AG04449 (cell line): ENCODE measurements at regions of chr6 and their contacts with region 1.

Region 1: GRCh38 chr6:43150051-43150751 is 20.9 kb upstream of the SRF start:
- DNase-seq: no peak
- H3K4me3 ChIP-seq: no peak overlapping the region
- CTCF ChIP-seq: no peak

Region 2: DNA sequence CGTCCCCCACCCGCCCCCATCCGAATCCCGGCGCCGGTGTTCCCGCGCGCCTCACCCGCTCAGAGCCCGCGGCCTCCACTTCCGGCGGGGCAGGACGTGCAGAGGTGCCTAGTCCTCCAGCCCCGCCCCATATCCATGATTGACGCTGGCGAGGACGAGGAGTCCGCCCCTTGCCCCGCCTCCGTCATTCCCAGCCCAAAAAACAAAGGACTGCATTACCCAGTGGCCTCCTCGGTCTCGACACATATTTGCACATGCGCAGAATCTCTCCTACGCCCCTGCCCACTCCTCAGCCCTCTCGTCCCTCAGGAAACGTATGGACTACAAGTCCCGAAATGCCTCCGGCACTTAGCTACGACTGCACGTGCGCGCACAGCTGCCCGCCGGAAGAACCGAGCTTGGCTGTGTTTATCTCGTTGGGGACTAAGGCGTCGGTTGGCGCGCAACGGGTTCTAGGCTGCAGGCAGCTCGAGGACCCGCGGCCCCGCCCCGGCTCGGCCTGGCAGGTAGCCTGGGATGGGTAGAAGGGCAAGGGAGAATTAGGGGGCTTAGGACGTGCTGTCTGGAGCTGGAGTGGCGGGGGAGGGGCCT is 136.3 kb before region 1 on chr6 and contains the starts of genes KLHDC3 and MEA1:
- CTCF ChIA-PET with region 1: no interaction called
- POLR2A ChIA-PET with region 1: interaction called, 10 read pairs
- DNase-seq: peak; percentile 99
- H3K4me3 ChIP-seq: peak within 1 kb of the TSS; percentile 98
- CTCF ChIP-seq: no peak

Region 3: DNA sequence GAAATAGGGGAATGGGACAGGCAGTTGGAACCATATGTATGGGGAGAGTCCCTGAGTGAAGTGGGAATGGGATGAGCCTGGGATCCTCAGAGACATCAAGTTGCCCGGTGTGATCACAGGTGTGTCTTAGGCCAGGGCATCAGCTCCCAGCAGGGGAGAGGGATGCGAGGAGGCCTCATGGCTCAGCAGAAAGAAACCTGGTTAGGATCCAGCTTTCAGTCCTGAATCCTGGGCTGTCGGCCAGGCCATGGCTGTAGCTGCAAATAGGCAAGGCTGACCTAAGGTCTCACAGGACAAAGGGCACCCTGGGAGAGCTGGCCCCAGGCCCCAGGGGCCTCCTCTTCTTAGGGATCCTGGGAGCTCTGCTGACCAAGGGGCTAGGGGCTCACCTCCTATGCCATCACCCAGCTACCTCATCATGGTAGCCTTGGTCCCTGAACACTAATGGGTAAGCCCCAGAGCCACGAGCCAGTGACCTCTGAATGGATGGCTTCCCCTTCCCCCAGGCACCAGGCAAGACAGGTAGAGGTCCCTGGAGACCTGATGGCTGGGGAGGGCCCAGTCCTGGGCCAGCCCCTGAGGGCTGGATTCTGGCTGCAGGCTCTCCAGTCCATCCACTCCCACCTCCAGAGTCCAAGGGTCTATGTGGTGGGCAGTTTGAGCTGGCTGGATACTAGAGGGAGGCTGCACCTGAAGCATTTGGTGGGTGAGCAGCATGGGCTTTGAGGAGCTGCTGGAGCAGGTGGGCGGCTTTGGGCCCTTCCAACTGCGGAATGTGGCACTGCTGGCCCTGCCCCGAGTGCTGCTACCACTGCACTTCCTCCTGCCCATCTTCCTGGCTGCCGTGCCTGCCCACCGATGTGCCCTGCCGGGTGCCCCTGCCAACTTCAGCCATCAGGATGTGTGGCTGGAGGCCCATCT is 147.7 kb after region 1 on chr6 and contains the start of gene SLC22A7:
- CTCF ChIA-PET with region 1: no interaction called
- POLR2A ChIA-PET with region 1: no interaction called
- DNase-seq: no peak
- H3K4me3 ChIP-seq: no peak within 1 kb of the TSS
- CTCF ChIP-seq: no peak

Region 4: DNA sequence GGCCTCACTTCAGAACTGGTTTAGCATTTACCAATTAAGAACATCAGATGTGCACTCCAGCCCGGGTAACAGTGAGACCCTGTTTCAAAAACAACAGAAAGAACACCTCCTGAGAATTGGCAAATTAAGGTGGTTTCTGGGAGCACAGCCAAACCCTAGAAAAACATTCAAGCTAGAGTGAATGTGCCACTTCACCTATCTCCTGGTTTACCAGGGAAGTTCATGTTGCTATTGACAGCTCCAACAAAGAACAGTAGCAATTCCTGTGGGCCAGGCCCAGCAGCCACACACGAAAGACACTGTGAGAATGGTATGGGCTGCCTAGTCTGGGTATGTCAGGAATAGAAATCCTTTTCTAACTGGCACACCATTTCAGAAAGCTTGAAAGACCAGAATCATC is 371.6 kb after region 1 on chr6:
- CTCF ChIA-PET with region 1: no interaction called
- POLR2A ChIA-PET with region 1: no interaction called
- DNase-seq: no peak
- H3K4me3 ChIP-seq: no peak overlapping the region
- CTCF ChIP-seq: no peak